ENCODE measurements at regions of chr7 and their contacts with region 1.

Region 1: DNA sequence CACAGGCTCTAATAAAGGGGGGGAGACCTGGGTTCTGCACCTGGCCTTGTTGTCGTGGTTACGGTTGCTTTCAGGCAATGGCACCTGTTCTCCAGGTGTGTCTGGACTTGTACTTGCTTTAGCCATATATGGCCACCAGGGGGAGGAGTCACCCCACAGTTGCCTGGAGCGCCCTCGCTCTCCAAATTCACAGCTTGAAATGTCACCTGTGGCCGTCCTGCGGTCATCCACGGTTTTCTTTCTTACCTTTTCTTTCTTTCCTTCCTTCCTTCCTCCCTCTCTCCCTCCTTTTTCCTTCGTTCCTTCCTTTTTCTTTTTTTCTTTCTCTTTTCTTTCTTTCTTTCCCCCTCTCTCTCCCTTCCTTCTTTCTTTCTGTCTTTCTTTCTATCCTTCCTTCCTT is 157.2 kb upstream of the ZNF92 start:
- DNase-seq: peak; percentile 83
- H3K4me3 ChIP-seq: no peak overlapping the region
- H3K27ac ChIP-seq: no peak overlapping the region
- H3K4me1 ChIP-seq: no peaks in the 10 kb centered on the region
- CTCF ChIP-seq: peak; percentile 83

Region 2: DNA sequence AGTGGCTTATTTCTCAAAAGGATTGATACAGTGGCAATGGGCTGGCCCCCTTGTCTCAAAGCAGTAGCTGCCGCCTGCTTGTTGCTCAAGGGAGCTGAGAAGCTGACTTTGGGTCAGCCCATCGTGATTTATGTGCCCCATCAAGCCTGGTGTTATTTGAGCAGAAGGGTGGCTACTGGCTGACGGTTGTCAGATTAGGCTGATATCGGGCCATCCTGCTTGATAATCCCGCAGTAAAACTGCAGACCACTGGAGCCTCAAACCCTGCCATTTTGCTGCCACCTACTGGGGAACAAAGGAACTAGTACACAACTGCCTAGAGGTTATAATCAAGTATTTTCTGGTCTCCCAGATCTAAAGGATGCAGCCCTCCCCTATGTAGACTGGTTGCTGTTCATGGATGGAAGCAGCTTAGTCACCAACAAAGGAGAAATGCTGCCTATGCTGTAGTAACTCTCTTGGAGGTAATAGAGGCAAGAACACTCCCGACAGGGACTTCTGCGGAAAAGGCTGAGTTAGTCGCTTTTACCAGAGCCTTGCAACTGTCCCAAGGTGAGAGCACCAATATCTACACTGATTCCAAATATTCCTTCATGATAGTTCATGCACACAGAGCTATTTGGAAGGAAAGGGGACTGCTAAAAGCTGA is 91.3 kb after region 1 on chr7:
- CTCF ChIA-PET with region 1: interaction called, 3 read pairs
- POLR2A ChIA-PET with region 1: no interaction called
- intact Hi-C with region 1: loop called (anchors 1 kb)
- DNase-seq: peak; percentile 81
- H3K4me3 ChIP-seq: no peak overlapping the region
- H3K27ac ChIP-seq: no peak overlapping the region
- H3K4me1 ChIP-seq: no peaks in the 10 kb centered on the region
- CTCF ChIP-seq: peak; percentile 95

Region 3: DNA sequence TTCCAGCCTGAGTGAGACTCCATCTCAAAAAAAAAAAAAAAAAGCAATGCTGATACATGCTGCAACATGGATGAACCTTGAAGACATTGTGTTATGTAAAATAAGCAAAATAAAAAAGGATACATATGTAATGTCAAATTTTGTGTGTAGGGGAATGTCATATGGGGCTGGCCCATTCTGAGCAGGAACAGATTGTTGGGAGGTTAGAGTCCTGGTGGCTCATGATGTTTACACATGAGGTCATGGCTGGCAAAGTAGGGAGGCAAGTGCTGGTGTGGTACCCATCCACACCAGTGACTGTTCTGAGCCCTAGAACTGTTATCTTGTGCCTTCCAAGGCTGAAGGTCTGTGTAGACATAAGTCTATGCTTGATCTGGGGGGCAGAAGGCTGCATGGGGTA is 194.8 kb after region 1 on chr7:
- CTCF ChIA-PET with region 1: no interaction called
- POLR2A ChIA-PET with region 1: no interaction called
- intact Hi-C with region 1: no loop called
- DNase-seq: no peak
- H3K4me3 ChIP-seq: no peak overlapping the region
- H3K27ac ChIP-seq: no peak overlapping the region
- H3K4me1 ChIP-seq: no peaks in the 10 kb centered on the region
- CTCF ChIP-seq: no peak

Region 4: DNA sequence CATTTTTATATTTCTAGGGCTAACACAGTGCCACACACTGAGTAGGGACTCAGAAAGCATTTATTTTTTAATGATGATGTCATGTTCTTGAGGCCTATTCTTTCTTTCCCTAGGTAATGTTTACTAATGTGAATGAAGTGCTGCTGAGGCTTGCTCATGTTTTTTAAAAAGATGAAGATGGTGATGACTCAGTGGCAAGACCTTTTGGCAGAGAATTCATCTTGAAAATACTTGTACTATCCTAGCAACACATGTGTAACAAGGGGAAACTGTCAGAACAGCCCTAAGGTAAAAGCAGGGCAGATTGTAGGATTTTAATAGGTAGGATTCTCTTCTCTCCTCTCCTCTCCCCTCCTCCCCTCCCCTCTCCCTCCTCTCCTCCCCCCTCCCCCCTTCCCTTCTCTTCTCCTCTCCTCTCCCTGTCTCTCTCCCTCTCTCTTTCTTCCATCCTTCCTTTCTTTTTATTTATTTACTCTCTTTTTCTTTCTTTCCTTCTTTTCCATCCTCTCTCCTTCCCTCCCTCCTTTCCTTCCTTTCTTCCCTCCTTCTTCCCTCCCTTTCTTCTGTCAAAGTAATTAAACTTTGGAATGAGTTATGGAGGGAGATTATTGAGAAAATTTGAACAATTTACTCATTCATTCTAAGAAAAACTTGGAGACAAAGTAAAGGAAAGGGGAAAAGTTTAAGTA is 232.5 kb after region 1 on chr7:
- CTCF ChIA-PET with region 1: no interaction called
- POLR2A ChIA-PET with region 1: no interaction called
- intact Hi-C with region 1: loop called (anchors 5 kb)
- DNase-seq: no peak
- H3K4me3 ChIP-seq: no peak overlapping the region
- H3K27ac ChIP-seq: no peak overlapping the region
- H3K4me1 ChIP-seq: peaks cover 14% of the 10 kb centered on the region
- CTCF ChIP-seq: no peak